CD4-positive, alpha-beta memory T cell (primary cell): ENCODE measurements at regions of chr4 and their contacts with region 1.

Region 1: DNA sequence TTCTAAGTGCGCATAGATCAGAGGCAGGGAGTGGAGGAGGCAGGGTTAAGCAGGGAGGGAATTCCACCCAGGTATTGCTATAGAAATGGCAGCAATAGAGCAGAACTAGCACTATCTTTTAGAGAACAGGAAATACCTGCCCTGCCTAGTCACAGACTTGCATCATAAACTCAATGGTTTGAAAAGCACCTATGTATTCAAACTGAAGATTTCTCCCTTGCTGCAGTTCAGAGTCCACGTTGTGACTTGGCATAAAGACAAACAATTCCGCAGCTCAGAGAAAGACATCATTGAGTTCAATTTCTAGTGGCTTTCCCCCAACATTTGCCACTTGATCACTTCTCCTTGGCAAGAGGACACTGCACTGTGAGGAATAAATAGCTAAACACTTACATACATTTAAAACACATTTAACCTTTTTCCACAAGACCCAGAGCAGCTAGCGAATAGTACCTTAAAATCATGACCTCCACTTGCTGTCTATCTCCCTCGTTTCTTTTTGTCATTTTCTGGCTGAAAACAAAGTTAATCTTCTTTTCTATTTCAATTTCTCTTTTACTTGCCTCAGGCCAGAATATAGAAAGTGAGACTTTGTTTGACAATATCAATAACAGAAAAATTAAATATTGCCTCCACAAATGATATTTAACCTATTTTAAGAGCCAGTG is 42.4 kb downstream of the SLC7A11 start:
- DNase-seq: no peak
- H3K4me3 ChIP-seq: no peak overlapping the region
- H3K4me3 Mint-ChIP-seq: no peak overlapping the region
- H3K27ac ChIP-seq: no peak overlapping the region
- H3K27ac Mint-ChIP-seq: no peak overlapping the region
- H3K4me1 ChIP-seq: no peaks in the 10 kb centered on the region
- H3K4me1 Mint-ChIP-seq: no peaks in the 10 kb centered on the region
- H3K27me3 ChIP-seq: no peaks in the 10 kb centered on the region
- H3K27me3 Mint-ChIP-seq: no peaks in the 10 kb centered on the region

Region 2: GRCh38 chr4:138138774-138139173 is 60.9 kb before region 1 on chr4:
- CTCF ChIA-PET with region 1: no interaction called
- POLR2A ChIA-PET with region 1: no interaction called
- intact Hi-C with region 1: loop called (anchors 10 kb)
- DNase-seq: no peak
- H3K4me3 ChIP-seq: no peak overlapping the region
- H3K4me3 Mint-ChIP-seq: no peak overlapping the region
- H3K27ac ChIP-seq: no peak overlapping the region
- H3K27ac Mint-ChIP-seq: no peak overlapping the region
- H3K4me1 ChIP-seq: no peaks in the 10 kb centered on the region
- H3K4me1 Mint-ChIP-seq: no peaks in the 10 kb centered on the region
- H3K27me3 ChIP-seq: no peaks in the 10 kb centered on the region
- H3K27me3 Mint-ChIP-seq: no peaks in the 10 kb centered on the region

Region 3: GRCh38 chr4:138222046-138222445 is 22.3 kb after region 1 on chr4:
- CTCF ChIA-PET with region 1: no interaction called
- POLR2A ChIA-PET with region 1: no interaction called
- intact Hi-C with region 1: no loop called
- DNase-seq: no peak
- H3K4me3 ChIP-seq: no peak overlapping the region
- H3K4me3 Mint-ChIP-seq: no peak overlapping the region
- H3K27ac ChIP-seq: no peak overlapping the region
- H3K27ac Mint-ChIP-seq: no peak overlapping the region
- H3K4me1 ChIP-seq: no peaks in the 10 kb centered on the region
- H3K4me1 Mint-ChIP-seq: no peaks in the 10 kb centered on the region
- H3K27me3 ChIP-seq: no peaks in the 10 kb centered on the region
- H3K27me3 Mint-ChIP-seq: no peaks in the 10 kb centered on the region